ENCODE measurements at regions of chr18 and their contacts with region 1.

Region 1: DNA sequence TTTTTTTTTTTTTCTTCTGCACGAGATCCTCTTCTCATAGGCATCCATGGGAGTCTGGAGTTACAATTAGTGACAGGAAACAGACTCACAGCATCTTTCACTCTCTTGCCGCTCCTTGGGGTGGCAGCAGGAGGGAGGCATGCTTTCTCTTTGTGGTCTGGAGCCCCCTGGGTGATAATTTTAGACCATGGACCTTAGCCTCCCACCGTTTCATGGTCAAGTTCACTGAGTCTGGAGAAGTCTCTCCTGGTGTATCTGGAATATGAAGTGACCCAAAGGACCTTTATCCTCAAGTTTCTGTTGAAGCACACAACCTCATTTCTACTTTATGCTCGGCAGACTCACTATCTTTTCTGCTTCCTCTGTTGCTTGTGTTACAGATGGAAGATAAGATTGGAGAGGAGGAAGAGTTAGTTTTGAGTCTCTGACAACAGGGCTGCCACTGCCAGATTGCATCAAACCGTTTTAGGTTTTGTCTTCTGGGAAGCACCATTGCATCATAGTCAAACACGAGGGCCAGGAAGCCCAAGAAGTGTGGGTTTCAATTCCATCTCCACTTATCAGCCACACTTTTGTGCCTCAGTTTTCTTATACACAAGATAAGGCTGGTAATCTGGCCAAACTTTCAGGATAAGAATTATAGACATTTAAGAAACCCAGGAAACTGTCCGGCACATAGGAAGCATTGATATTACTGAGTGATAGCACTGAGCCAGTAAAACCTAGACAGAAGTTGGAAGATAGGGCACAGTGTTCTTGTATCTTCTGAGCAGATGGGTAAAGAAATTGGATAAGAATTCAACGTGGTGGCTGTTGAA is 62.3 kb downstream of the ADCYAP1 start:
- DNase-seq: peak in 1 of 4 experiments; percentile 65
- ATAC-seq: peak; percentile 48
- H3K4me3 ChIP-seq: no peak overlapping the region
- H3K27ac ChIP-seq: peak overlapping the region; percentile 37; the same call in 2 of the 3 replicates
- H3K4me1 ChIP-seq: peaks cover 3 to 24% of the 10 kb centered on the region in 2 experiments; a peak in 4 of 5 replicates
- H3K27me3 ChIP-seq: no peaks in the 10 kb centered on the region; a peak in 1 of 5 replicates
- CTCF ChIP-seq: no peak
- EP300 ChIP-seq: peak; percentile 98
- POLR2A ChIP-seq: no peak
- RAD21 ChIP-seq: peak; percentile 23 to 43

Region 2: GRCh38 chr18:731185-731584 is 235.8 kb before region 1 on chr18:
- CTCF ChIA-PET with region 1: no interaction called
- POLR2A ChIA-PET with region 1: no interaction called
- in situ Hi-C with region 1: no loop called
- intact Hi-C with region 1: no loop called
- DNase-seq: peak; percentile 30 to 54 (median 44)
- ATAC-seq: peak; percentile 19
- H3K4me3 ChIP-seq: no peak overlapping the region
- H3K27ac ChIP-seq: peak overlapping the region; percentile 0; the same call in 1 of the 3 replicates
- H3K4me1 ChIP-seq: peaks cover 3 to 7% of the 10 kb centered on the region in 2 experiments; a peak in 2 of 5 replicates
- H3K27me3 ChIP-seq: no peaks in the 10 kb centered on the region
- CTCF ChIP-seq: no peak
- EP300 ChIP-seq: 0 out of 2 replicates have a peak, but pooled peaks have one; percentile 36
- POLR2A ChIP-seq: no peak
- RAD21 ChIP-seq: no peak

Region 3: DNA sequence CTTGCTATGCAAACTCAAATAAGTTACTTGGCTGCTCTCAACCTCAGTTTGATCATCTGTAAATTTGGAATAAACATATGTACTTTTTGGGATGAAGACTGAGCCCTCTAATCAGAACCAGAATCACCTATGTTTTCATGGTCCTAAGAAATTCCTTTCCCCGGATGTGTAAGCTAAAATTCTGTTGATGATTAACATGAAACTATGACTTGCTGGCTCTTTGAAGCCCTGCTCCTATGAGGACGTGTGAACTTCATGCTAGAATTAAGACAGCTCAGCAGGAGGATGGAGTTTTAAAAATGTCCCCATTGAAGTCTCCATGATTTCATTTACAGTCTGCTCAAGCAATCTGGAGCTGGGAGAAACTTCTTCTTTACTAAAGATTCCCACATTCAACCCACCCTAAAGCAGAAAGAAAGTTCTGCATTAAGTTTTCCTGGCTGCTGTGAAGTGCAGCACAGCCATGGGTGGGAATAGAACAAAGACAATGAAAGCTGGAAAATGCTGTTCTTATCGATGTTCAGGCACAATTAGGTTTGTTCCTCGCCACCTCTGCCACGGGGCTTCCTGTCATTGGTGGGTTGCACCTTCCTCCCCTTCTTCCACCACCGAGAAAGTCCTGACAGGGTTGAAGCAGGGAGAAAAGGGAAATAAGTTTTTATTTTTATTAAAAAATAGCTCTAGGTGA is 11.4 kb before region 1 on chr18:
- CTCF ChIA-PET with region 1: no interaction called
- POLR2A ChIA-PET with region 1: interaction called, 11 read pairs
- in situ Hi-C with region 1: no loop called
- intact Hi-C with region 1: no loop called
- DNase-seq: no peak
- ATAC-seq: no peak
- H3K4me3 ChIP-seq: no peak overlapping the region
- H3K27ac ChIP-seq: no peak overlapping the region
- H3K4me1 ChIP-seq: no peaks in the 10 kb centered on the region; a peak in 1 of 5 replicates
- H3K27me3 ChIP-seq: peaks cover 0 to 12% of the 10 kb centered on the region in 2 experiments; a peak in 4 of 5 replicates
- CTCF ChIP-seq: no peak
- EP300 ChIP-seq: no peak
- POLR2A ChIP-seq: no peak
- RAD21 ChIP-seq: no peak

Region 4: DNA sequence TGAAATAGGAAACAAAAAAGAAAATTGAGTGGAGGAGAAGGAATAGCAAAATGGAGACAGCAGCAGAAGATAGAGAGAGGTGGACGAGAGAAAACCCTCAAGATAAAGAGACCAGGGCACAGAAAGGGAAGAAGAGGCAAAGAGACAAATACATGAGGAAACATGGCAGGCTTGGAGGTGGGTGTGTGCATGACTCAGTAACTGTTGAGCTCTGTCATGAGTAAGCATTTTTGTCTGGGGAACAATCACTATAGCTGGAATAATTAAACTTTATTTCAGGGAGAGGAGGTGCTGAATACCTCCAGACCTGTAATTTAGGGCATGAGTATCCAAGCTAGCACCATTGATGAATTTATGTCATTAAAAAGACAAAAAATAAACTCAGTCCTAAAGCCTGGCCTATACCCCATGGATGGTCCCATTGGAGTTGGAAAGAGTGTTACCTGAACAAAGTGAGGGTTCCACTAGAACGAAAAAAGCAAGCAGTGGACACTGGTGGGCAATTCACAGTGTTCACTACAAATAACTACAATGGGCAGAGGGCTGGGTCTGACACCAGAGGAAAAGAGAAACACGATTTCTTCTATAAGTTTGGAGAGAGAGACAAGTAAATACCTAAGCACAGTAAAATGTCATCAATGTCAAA is 83.2 kb after region 1 on chr18:
- CTCF ChIA-PET with region 1: no interaction called
- POLR2A ChIA-PET with region 1: interaction called, 3 read pairs
- in situ Hi-C with region 1: no loop called
- intact Hi-C with region 1: loop called (anchors 5 kb)
- DNase-seq: peak; percentile 31 to 85 (median 60)
- ATAC-seq: peak; percentile 94
- H3K4me3 ChIP-seq: no peak overlapping the region
- H3K27ac ChIP-seq: peak overlapping the region; percentile 83
- H3K4me1 ChIP-seq: peaks cover 2 to 37% of the 10 kb centered on the region in 2 experiments; a peak in 4 of 5 replicates
- H3K27me3 ChIP-seq: no peaks in the 10 kb centered on the region
- CTCF ChIP-seq: no peak
- EP300 ChIP-seq: peak; percentile 87
- POLR2A ChIP-seq: no peak
- RAD21 ChIP-seq: no peak

Measured in K562 (cell line).